GM12878 (cell line): ENCODE measurements at regions of chr11 and their contacts with region 1.

Region 1: GRCh38 chr11:74773481-74773880 is 24.8 kb downstream of the RNF169 start:
- DNase-seq: no peak
- ATAC-seq: no peak
- H3K4me3 ChIP-seq: no peak overlapping the region
- H3K27ac ChIP-seq: no peak overlapping the region
- H3K4me1 ChIP-seq: peaks cover 31% of the 10 kb centered on the region
- H3K27me3 ChIP-seq: no peaks in the 10 kb centered on the region
- CTCF ChIP-seq: no peak
- EP300 ChIP-seq: no peak
- POLR2A ChIP-seq: no peak
- RAD21 ChIP-seq: no peak

Region 2: DNA sequence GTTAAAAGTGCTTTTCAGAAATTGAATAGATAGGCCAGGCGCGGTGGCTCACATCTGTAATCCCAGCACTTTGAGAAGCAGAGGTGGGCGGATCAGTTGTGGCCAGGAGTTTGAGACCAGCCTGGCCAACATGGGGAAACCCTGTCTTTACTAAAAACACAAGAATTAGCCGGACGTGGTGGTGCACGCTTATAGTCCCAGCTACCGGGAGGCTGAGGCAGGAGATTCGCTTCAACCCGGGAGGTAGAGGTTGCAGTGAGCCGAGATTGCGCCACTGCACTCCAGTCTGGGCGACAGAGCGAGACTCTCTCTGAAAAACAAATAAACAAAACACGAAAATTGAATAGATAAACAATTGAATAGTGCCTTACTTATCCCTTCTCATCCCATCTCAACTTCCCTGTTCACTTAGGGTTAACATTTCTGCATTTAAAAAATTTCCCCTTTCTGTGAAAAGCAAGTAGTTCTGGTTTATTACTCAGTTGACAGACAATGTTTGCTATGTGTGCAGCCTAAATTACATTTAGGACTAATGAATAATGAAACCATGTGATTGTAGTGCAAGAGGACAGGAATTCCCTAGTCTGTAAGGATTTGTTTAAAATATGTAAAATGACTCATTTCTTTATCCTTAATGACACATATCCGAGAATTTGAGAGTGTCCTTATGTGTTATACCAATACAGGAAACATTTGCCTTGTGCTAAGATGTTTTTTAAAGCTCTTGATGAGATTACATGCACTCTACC is 18.8 kb before region 1 on chr11:
- CTCF ChIA-PET with region 1: interaction called, 3 read pairs
- POLR2A ChIA-PET with region 1: interaction called, 9 read pairs
- RAD21 ChIA-PET with region 1: interaction called, 4 read pairs
- SMC1A ChIA-PET with region 1: interaction called, 5 read pairs
- in situ Hi-C with region 1: no loop called
- intact Hi-C with region 1: loop called (anchors 2 kb)
- DNase-seq: peak; percentile 20
- ATAC-seq: peak; percentile 70
- H3K4me3 ChIP-seq: peak overlapping the region; percentile 29; the same call in 1 of the 2 replicates
- H3K27ac ChIP-seq: no peak overlapping the region
- H3K4me1 ChIP-seq: peaks cover 17% of the 10 kb centered on the region
- H3K27me3 ChIP-seq: no peaks in the 10 kb centered on the region
- CTCF ChIP-seq: no peak
- EP300 ChIP-seq: no peak
- POLR2A ChIP-seq: no peak
- RAD21 ChIP-seq: no peak

Region 3: GRCh38 chr11:74819400-74819799 is 45.9 kb after region 1 on chr11:
- CTCF ChIA-PET with region 1: no interaction called
- POLR2A ChIA-PET with region 1: no interaction called
- RAD21 ChIA-PET with region 1: interaction called, 3 read pairs
- SMC1A ChIA-PET with region 1: no interaction called
- in situ Hi-C with region 1: no loop called
- intact Hi-C with region 1: loop called (anchors 5 kb)
- DNase-seq: no peak
- ATAC-seq: no peak
- H3K4me3 ChIP-seq: no peak overlapping the region
- H3K27ac ChIP-seq: no peak overlapping the region
- H3K4me1 ChIP-seq: no peaks in the 10 kb centered on the region
- H3K27me3 ChIP-seq: no peaks in the 10 kb centered on the region
- CTCF ChIP-seq: no peak
- EP300 ChIP-seq: no peak
- POLR2A ChIP-seq: no peak
- RAD21 ChIP-seq: no peak

Region 4: GRCh38 chr11:74971424-74971823 is 197.9 kb after region 1 on chr11:
- CTCF ChIA-PET with region 1: no interaction called
- POLR2A ChIA-PET with region 1: no interaction called
- RAD21 ChIA-PET with region 1: no interaction called
- SMC1A ChIA-PET with region 1: no interaction called
- in situ Hi-C with region 1: no loop called
- intact Hi-C with region 1: no loop called
- DNase-seq: no peak
- ATAC-seq: no peak
- H3K4me3 ChIP-seq: no peak overlapping the region
- H3K27ac ChIP-seq: no peak overlapping the region
- H3K4me1 ChIP-seq: no peaks in the 10 kb centered on the region
- H3K27me3 ChIP-seq: no peaks in the 10 kb centered on the region
- CTCF ChIP-seq: no peak
- EP300 ChIP-seq: no peak
- POLR2A ChIP-seq: no peak
- RAD21 ChIP-seq: no peak

Region 5: DNA sequence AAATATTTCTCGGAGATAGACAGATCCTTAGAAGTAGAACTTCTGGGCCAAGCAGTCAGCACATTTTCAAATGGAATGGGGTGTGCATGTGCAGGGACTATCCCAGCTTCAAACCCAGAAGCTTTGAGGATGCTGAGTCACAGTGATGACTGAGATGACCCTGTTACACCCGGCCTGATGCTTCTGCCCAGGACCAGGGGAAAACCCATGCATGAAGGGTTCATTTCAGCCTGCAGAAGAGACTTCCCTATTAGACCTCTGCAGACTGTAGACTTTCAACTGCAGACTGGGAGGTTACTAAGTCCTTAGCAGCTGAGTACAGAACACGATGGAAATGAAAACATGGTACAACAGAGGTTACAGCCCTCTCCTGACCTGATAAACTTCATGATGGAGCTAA is 326.8 kb after region 1 on chr11:
- CTCF ChIA-PET with region 1: no interaction called
- POLR2A ChIA-PET with region 1: no interaction called
- RAD21 ChIA-PET with region 1: no interaction called
- SMC1A ChIA-PET with region 1: no interaction called
- in situ Hi-C with region 1: no loop called
- intact Hi-C with region 1: no loop called
- DNase-seq: peak; percentile 78
- ATAC-seq: peak; percentile 97
- H3K4me3 ChIP-seq: peak overlapping the region; percentile 1; the same call in 1 of the 2 replicates
- H3K27ac ChIP-seq: peak overlapping the region; percentile 57
- H3K4me1 ChIP-seq: peaks cover 8% of the 10 kb centered on the region; the same call in 1 of the 2 replicates
- H3K27me3 ChIP-seq: no peaks in the 10 kb centered on the region
- CTCF ChIP-seq: no peak
- EP300 ChIP-seq: no peak; a peak in 1 of 4 replicates
- POLR2A ChIP-seq: no peak
- RAD21 ChIP-seq: no peak